ENCODE measurements at regions of chr1 and their contacts with region 1.

Region 1: GRCh38 chr1:119987112-119987511 is 82.3 kb downstream of the NOTCH2 start:
- DNase-seq: peak; percentile 7 to 76
- H3K4me3 ChIP-seq: no peak overlapping the region
- H3K27ac ChIP-seq: 0 out of 2 replicates have a peak overlapping the region, but pooled peaks have one; percentile 19
- H3K4me1 ChIP-seq: peaks cover 25% of the 10 kb centered on the region
- H3K27me3 ChIP-seq: no peaks in the 10 kb centered on the region
- CTCF ChIP-seq: no peak

Region 2: GRCh38 chr1:119924948-119925898 is 61.9 kb before region 1 on chr1:
- CTCF ChIA-PET with region 1: no interaction called
- POLR2A ChIA-PET with region 1: interaction called, 11 read pairs
- intact Hi-C with region 1: no loop called
- DNase-seq: no peak
- H3K4me3 ChIP-seq: no peak overlapping the region
- H3K27ac ChIP-seq: no peak overlapping the region
- H3K4me1 ChIP-seq: peaks cover 12% of the 10 kb centered on the region
- H3K27me3 ChIP-seq: no peaks in the 10 kb centered on the region
- CTCF ChIP-seq: no peak